ENCODE measurements at regions of chr1 and their contacts with region 1.

Region 1: DNA sequence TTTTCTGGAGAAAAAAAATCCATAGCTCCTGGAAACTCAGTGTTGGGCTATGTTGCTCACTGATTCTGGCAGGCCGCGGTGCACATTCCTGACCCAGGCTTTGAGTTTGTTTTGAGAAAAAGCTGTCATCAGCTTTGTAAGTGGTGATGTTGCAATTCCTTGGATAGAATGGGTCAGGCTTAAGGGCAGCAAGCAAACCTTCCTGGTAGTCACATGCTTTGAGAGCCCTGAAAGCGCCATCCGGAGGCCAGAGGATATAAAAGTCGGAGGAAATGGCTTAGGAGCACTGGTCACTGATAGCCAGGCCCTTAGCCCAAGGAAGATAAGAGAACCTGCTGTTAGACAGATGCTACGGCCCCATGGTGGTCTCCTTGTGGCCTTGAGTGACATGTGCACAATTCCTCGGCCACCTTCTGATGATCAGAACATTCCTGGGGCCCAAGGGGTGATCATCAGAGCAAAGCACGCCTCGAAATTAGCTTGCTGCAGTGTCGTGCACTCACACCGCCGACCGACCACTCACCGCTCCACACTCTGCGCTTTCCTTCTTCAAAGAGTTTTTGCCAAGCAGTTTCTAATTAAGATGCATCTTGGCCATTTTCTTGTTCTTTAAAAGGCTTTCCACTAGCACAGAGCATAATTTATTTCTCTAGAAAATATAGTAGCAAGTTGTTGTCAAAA is 78.6 kb downstream of the MAN1C1 start:
- DNase-seq: peak; percentile 66
- ATAC-seq: peak; percentile 77
- H3K4me3 ChIP-seq: no peak overlapping the region
- H3K27ac ChIP-seq: no peak overlapping the region
- H3K4me1 ChIP-seq: 0 out of 2 replicates have a peak, but pooled peaks cover 9% of the 10 kb centered on the region
- H3K27me3 ChIP-seq: 0 out of 5 replicates have a peak, but pooled peaks cover 0 to 7% of the 10 kb centered on the region in 2 experiments
- CTCF ChIP-seq: no peak; the same call in 1 of the 2 replicates
- EP300 ChIP-seq: no peak
- POLR2A ChIP-seq: no peak
- RAD21 ChIP-seq: no peak

Region 2: DNA sequence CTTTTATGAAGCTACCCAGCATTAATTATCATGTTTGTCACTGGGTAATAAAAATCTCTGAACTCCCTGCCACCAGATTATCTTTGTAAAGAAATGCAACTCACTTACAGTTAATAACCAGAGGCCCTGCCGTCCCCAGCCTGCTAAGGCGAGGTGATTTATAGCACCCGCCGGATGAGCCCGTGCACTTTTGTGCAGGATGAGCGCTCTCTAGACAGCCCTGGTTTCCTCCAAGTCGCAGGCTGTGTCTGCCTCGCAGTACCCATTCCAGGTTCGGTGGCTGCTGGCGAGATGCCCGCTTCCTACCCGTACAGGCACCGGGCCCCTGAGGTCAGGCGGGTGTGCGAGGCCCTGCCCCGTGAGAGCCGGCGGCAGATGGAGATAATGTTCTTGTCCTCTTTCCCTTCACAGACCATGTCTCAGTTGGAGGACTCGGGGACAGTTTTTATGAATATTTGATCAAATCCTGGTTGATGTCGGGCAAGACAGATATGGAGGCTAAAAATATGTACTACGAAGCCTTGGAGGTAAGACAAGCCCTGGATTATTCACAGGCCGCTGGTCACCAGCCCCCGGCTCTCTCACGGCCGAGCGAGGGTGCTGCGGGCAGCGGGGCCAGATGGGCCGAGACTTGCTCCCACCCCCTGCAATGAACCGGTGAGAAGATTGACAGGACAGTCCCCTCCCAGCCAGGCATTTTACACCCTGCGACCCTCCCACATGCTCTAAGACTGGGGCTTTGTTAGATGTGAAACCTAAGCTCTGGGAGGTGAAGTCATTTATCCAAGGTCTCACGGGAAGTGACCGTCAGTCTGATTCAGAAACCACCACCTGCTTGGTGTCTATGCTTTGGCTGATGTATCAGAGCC is 76.2 kb after region 1 on chr1:
- CTCF ChIA-PET with region 1: no interaction called
- POLR2A ChIA-PET with region 1: no interaction called
- in situ Hi-C with region 1: no loop called
- intact Hi-C with region 1: loop called (anchors 10 kb)
- DNase-seq: peak; percentile 74
- ATAC-seq: peak; percentile 48
- H3K4me3 ChIP-seq: peak overlapping the region; percentile 35 to 69 (median 52)
- H3K27ac ChIP-seq: no peak overlapping the region
- H3K4me1 ChIP-seq: peaks cover 63% of the 10 kb centered on the region
- H3K27me3 ChIP-seq: peaks cover 7 to 27% of the 10 kb centered on the region in 2 experiments
- CTCF ChIP-seq: no peak
- EP300 ChIP-seq: no peak
- POLR2A ChIP-seq: 0 out of 4 replicates have a peak, but pooled peaks of 1 of the 2 experiments have one; percentile 22
- RAD21 ChIP-seq: no peak

Measured in HepG2 (cell line).